IMR-90 (cell line): ENCODE measurements at regions of chr18 and their contacts with region 1.

Region 1: DNA sequence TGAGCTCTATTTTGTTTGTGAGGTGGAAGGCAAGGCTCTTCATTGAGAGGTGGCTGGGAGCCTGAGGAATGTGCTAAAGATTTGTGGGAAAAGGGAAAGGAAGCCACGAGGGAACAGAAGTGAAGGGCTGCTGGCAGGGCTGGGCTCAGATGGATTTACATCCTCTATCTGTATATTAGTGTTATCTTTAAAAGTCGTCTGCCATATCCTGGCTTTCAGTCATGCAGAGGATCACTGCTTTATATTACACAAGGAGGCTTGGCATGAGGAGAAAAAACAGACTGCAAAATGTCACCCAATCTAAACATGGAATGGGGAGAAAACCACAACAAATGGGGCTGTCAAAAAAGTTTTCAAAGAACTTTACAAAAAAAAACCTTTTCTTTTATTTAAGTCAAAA is 434.4 kb downstream of the HRH4 start:
- DNase-seq: peak; percentile 20
- ATAC-seq: peak; percentile 57
- H3K4me3 ChIP-seq: no peak overlapping the region
- H3K27ac ChIP-seq: peak overlapping the region; percentile 2; the same call in 1 of the 2 replicates
- H3K4me1 ChIP-seq: peaks cover 11% of the 10 kb centered on the region
- H3K27me3 ChIP-seq: no peaks in the 10 kb centered on the region; the same call in 1 of the 2 replicates
- CTCF ChIP-seq: no peak
- POLR2A ChIP-seq: no peak
- RAD21 ChIP-seq: no peak

Region 2: DNA sequence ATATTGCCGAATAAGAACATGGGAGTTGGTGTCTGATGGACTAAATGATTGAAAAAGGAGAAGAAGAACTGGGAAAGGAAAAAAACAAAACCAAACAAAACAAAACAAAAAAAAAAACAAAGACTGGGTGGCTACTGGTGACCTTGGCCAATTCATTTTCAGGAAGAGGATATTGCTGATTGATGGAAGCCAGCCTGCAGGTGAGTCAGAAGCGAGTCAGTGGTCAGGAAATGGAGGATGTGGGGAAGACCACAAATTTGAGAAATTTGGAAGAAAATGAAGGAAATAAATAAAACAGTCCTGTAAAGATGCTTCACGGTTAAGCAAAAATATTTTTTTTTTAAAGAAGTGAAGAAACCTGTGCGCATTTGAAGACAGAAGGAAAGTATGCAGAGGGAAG is 160.2 kb after region 1 on chr18:
- CTCF ChIA-PET with region 1: no interaction called
- POLR2A ChIA-PET with region 1: no interaction called
- dilution Hi-C with region 1: no loop called
- in situ Hi-C with region 1: no loop called
- intact Hi-C with region 1: no loop called
- DNase-seq: peak; percentile 56
- ATAC-seq: no peak
- H3K4me3 ChIP-seq: no peak overlapping the region
- H3K27ac ChIP-seq: no peak overlapping the region
- H3K4me1 ChIP-seq: peaks cover 2% of the 10 kb centered on the region; the same call in 1 of the 2 replicates
- H3K27me3 ChIP-seq: no peaks in the 10 kb centered on the region
- CTCF ChIP-seq: no peak
- POLR2A ChIP-seq: no peak
- RAD21 ChIP-seq: no peak

Region 3: GRCh38 chr18:25076980-25077943 is 182.4 kb after region 1 on chr18:
- CTCF ChIA-PET with region 1: no interaction called
- POLR2A ChIA-PET with region 1: no interaction called
- dilution Hi-C with region 1: no loop called
- in situ Hi-C with region 1: no loop called
- intact Hi-C with region 1: loop called (anchors 10 kb)
- DNase-seq: no peak
- ATAC-seq: no peak
- H3K4me3 ChIP-seq: no peak overlapping the region
- H3K27ac ChIP-seq: no peak overlapping the region
- H3K4me1 ChIP-seq: peaks cover 10% of the 10 kb centered on the region; the same call in 1 of the 2 replicates
- H3K27me3 ChIP-seq: no peaks in the 10 kb centered on the region
- CTCF ChIP-seq: no peak
- POLR2A ChIP-seq: no peak
- RAD21 ChIP-seq: no peak